Right ventricle myocardium inferior (tissue), 1 donor: ENCODE measurements at regions of chr5 and their contacts with region 1.

Region 1: GRCh38 chr5:139690064-139690802 is 42.1 kb downstream of the CXXC5 start:
- DNase-seq: no peak
- ATAC-seq: peak; percentile 11

Region 2: DNA sequence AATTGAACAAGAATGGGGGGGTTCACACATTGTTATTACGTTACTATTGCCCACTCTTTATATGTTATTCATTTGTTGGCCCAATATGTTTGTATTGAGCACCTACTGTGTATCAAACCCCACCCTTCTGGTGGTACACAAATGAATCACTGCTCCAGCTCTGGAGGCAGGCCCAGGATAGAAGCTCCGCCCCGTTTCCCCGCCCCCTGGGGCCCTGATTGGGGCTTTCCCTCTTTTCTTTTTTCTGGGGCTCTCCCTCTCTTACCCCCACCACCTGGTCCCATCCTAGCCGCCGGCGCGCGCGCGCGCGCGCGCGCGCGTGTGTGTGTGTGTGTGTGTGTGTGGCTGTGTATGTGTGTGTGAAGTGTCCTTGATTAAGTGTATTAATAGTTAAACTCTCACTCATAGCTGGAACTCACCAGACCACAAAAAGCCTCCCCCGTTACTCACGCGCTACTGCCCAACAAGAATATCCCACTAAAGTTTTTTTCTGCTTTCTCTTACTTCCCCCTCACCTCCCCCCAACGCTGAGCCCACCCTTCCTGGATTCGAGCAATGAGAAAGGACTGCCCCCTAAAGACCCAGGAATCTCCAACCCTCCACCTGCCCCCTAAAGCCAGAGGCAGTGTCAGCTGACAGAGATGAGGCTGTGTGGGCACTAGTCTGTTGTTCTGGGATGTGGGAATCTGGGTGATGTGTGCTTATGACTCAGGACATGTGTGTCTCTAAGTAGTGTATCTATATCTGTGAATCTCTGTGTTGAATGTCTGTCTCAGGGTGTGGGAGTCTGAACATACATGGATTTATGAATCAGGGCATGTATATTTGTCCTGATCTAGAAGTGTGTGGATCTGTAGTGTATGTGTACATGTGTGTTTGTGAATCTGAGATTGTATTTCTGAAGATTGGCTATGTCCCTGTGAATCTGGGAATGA is 38.1 kb before region 1 on chr5:
- intact Hi-C with region 1: loop called (anchors 2 kb)
- DNase-seq: peak; percentile 77
- ATAC-seq: peak; percentile 14